Tibial artery (tissue), 4 donors: ENCODE measurements at regions of chr1 and their contacts with region 1.

Region 1: GRCh38 chr1:15994590-15995351 is 9.3 kb upstream of the SRARP start:
- DNase-seq: peak; percentile 58 to 82
- H3K4me3 ChIP-seq: no peak overlapping the region
- H3K27ac ChIP-seq: no peak overlapping the region
- H3K4me1 ChIP-seq: no peaks in the 10 kb centered on the region
- H3K27me3 ChIP-seq: no peaks in the 10 kb centered on the region
- CTCF ChIP-seq: peak; percentile 88 to 93

Region 2: GRCh38 chr1:15799004-15799936 is 195.5 kb before region 1 on chr1:
- intact Hi-C with region 1: loop called (anchors 5 kb)
- DNase-seq: peak; percentile 89 to 97
- H3K4me3 ChIP-seq: no peak overlapping the region
- H3K27ac ChIP-seq: peak overlapping the region; percentile 84 to 86
- H3K4me1 ChIP-seq: peaks cover 0 to 84% (median 62%) of the 10 kb centered on the region in 4 donors
- H3K27me3 ChIP-seq: no peaks in the 10 kb centered on the region
- CTCF ChIP-seq: no peak

Region 3: DNA sequence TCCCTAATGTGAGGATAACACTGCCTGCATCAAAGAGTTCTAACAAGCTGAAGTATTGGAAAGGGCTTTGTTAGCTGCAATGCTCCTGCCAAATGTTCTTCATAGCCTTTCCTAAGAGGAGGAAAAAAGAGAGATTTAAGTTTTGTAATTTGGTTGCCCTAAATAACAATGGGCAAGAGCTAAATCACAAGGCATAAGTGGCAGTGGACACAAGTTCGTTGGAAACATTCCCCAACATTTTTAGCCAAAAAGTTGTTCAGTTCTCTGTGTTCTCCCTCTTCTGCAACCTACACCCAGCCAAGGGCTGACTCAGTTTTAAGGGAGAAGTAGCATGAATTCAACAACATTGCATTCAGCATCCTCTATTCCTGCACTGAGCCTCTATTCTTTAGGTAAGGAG is 184.7 kb before region 1 on chr1:
- intact Hi-C with region 1: loop called (anchors 5 kb)
- DNase-seq: peak; percentile 72 to 82
- H3K4me3 ChIP-seq: no peak overlapping the region
- H3K27ac ChIP-seq: peak overlapping the region; percentile 76 to 82
- H3K4me1 ChIP-seq: peaks cover 0 to 45% (median 19%) of the 10 kb centered on the region in 4 donors
- H3K27me3 ChIP-seq: no peaks in the 10 kb centered on the region
- CTCF ChIP-seq: no peak

Region 4: DNA sequence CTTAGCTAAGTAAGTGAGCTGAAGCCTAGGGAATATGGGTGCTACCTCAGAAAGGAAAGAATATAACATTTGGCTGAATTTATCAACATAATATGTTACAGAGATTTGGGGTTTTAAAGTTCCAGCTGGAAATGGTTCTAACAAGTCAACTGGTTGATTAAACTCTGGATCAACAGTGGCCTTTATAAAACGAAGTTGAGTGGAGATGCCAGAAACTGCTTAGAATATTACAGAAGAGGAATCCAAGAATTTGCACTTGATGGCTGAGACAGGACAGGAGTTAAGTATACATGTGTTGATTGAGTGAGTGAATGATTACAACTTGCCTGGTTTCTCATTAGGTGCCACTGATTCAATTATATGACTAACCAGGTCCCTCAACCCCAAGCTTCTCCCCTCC is 11.5 kb before region 1 on chr1:
- intact Hi-C with region 1: no loop called
- DNase-seq: no peak
- H3K4me3 ChIP-seq: no peak overlapping the region
- H3K27ac ChIP-seq: no peak overlapping the region
- H3K4me1 ChIP-seq: no peaks in the 10 kb centered on the region
- H3K27me3 ChIP-seq: no peaks in the 10 kb centered on the region
- CTCF ChIP-seq: no peak

Region 5: GRCh38 chr1:16064536-16065268 is 69.9 kb after region 1 on chr1:
- intact Hi-C with region 1: no loop called
- DNase-seq: peak in 1 of 2 donors; percentile 70
- H3K4me3 ChIP-seq: no peak overlapping the region
- H3K27ac ChIP-seq: no peak overlapping the region
- H3K4me1 ChIP-seq: peaks cover 0 to 22% (median 12%) of the 10 kb centered on the region in 4 donors
- H3K27me3 ChIP-seq: no peaks in the 10 kb centered on the region
- CTCF ChIP-seq: no peak